A549 (cell line): ENCODE measurements at regions of chr15 and their contacts with region 1.

Region 1: DNA sequence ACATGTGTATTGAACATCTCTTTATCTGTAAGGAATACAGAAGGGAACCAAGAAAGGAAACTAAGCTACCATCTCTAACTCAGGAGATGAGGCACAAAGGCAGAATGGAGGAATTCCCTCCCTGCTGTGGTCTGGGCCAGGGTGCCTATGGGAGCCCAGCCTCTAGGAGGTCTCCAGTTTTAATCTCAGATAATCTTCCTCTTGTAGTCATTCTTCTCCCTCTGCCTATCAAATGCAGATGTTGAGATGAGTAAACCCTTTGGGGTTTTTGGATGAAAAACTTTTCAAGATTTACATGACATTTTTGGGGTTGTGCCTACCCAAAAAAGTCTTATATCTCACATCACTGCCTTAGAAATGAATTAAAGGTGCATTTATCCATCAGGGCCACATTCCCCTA is 23.3 kb downstream of the SCG5 start:
- DNase-seq: no peak
- ATAC-seq: no peak
- H3K4me3 ChIP-seq: no peak overlapping the region
- H3K27ac ChIP-seq: peak overlapping the region; percentile 29 to 68; a peak in 1 of 6 replicates
- H3K4me1 ChIP-seq: peaks cover 21% of the 10 kb centered on the region
- CTCF ChIP-seq: no peak
- EP300 ChIP-seq: no peak
- POLR2A ChIP-seq: no peak
- RAD21 ChIP-seq: no peak

Region 2: DNA sequence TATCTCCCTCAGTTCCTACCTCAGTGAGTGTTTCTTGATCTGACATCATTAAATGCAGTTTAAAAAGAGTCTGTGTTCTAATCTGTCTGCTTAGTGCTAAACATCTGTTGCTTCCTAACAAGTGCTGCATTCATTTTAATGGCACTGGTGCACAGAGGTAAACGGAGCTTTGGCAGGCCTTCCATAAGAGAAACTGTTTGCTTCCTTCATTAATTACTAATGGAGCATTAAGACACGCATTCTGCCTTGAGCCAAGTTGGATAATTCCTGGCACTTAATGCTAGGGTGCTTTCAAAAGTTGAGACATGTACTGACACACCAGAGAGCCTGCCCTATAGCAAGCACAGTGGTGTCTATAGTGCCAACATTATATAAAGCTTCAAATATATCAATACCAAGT is 11.4 kb after region 1 on chr15:
- CTCF ChIA-PET with region 1: interaction called, 60 read pairs
- POLR2A ChIA-PET with region 1: no interaction called
- DNase-seq: no peak
- ATAC-seq: no peak
- H3K4me3 ChIP-seq: no peak overlapping the region
- H3K27ac ChIP-seq: peak overlapping the region; percentile 41 to 77
- H3K4me1 ChIP-seq: peaks cover 40% of the 10 kb centered on the region
- CTCF ChIP-seq: no peak
- EP300 ChIP-seq: no peak
- POLR2A ChIP-seq: no peak
- RAD21 ChIP-seq: no peak

Region 3: GRCh38 chr15:32715276-32715675 is 50.5 kb after region 1 on chr15:
- CTCF ChIA-PET with region 1: interaction called, 10 read pairs
- POLR2A ChIA-PET with region 1: no interaction called
- DNase-seq: no peak
- ATAC-seq: no peak
- H3K4me3 ChIP-seq: no peak overlapping the region
- H3K27ac ChIP-seq: no peak overlapping the region
- H3K4me1 ChIP-seq: peaks cover 11% of the 10 kb centered on the region; the same call in 1 of the 3 replicates
- CTCF ChIP-seq: no peak
- EP300 ChIP-seq: no peak
- POLR2A ChIP-seq: no peak
- RAD21 ChIP-seq: no peak

Region 4: DNA sequence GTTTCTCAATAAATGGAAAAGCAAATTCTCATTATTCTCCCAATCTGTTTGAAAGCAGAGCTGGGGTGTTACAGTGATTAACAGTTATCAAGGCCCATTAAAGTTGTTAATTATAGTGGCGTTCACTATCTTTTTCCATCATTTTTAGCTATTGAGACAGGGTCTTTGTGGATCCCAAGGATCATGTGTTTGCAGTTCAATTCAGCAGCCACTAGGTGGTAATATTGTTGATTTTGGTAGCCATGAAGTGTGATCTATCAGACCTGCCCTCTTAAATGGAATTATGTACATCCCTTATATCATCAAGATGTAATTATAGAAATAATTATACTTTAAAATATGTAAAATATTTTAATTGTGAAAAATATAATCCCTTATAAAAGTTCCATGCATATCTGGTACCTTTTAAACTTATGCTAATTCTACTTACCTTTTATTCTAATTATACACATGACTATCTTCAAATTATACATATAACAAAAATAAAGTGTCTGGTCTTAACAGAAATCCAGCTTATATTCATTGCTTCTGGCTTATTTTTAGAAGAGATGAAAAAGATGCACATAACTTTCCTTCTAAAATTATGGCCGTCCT is 179.4 kb after region 1 on chr15:
- CTCF ChIA-PET with region 1: interaction called, 57 read pairs
- POLR2A ChIA-PET with region 1: interaction called, 3 read pairs
- DNase-seq: peak; percentile 40 to 69
- ATAC-seq: peak in 1 of 2 experiments; percentile 62; a peak in 3 of 6 replicates
- H3K4me3 ChIP-seq: no peak overlapping the region
- H3K27ac ChIP-seq: peak overlapping the region in 1 of 2 experiments; percentile 41; a peak in 1 of 6 replicates
- H3K4me1 ChIP-seq: peaks cover 26% of the 10 kb centered on the region
- CTCF ChIP-seq: peak; percentile 77
- EP300 ChIP-seq: no peak
- POLR2A ChIP-seq: no peak
- RAD21 ChIP-seq: peak; percentile 73 to 78

Region 5: GRCh38 chr15:32901192-32901591 is 236.4 kb after region 1 on chr15:
- CTCF ChIA-PET with region 1: no interaction called
- POLR2A ChIA-PET with region 1: no interaction called
- DNase-seq: no peak
- ATAC-seq: no peak
- H3K4me3 ChIP-seq: no peak overlapping the region
- H3K27ac ChIP-seq: no peak overlapping the region
- H3K4me1 ChIP-seq: peaks cover 9% of the 10 kb centered on the region; the same call in 2 of the 3 replicates
- CTCF ChIP-seq: no peak
- EP300 ChIP-seq: no peak
- POLR2A ChIP-seq: no peak
- RAD21 ChIP-seq: no peak

Region 6: DNA sequence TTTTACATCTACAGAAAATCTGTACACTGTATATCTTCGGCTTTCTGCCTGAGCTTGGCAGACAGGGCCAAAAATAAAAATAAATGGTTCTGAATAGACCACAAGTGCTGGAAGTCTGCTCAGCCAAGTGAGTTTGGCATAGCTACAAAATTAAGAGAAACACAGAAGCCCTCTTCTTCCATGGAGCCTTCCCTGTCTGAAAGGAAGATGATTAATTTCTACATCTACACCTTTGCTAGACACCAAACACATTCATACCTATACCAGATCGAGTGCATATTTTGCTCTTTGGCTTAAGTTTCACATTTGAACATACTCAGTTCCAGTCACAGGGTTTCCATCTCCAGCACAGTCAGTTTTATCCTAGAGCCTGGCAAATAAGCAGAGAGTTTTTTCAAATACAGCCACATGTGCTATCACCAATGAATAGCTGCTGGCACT is 277.6 kb after region 1 on chr15:
- CTCF ChIA-PET with region 1: interaction called, 17 read pairs
- POLR2A ChIA-PET with region 1: no interaction called
- DNase-seq: no peak
- ATAC-seq: no peak
- H3K4me3 ChIP-seq: no peak overlapping the region
- H3K27ac ChIP-seq: no peak overlapping the region
- H3K4me1 ChIP-seq: no peaks in the 10 kb centered on the region
- CTCF ChIP-seq: no peak
- EP300 ChIP-seq: no peak
- POLR2A ChIP-seq: no peak
- RAD21 ChIP-seq: no peak

Region 7: GRCh38 chr15:32987067-32987466 is 322.3 kb after region 1 on chr15:
- CTCF ChIA-PET with region 1: interaction called, 26 read pairs
- POLR2A ChIA-PET with region 1: no interaction called
- DNase-seq: no peak
- ATAC-seq: no peak
- H3K4me3 ChIP-seq: no peak overlapping the region
- H3K27ac ChIP-seq: no peak overlapping the region
- H3K4me1 ChIP-seq: no peaks in the 10 kb centered on the region
- CTCF ChIP-seq: no peak
- EP300 ChIP-seq: no peak
- POLR2A ChIP-seq: no peak
- RAD21 ChIP-seq: no peak